Transverse colon (tissue), 4 donors: ENCODE measurements at regions of chr4 and their contacts with region 1.

Region 1: DNA sequence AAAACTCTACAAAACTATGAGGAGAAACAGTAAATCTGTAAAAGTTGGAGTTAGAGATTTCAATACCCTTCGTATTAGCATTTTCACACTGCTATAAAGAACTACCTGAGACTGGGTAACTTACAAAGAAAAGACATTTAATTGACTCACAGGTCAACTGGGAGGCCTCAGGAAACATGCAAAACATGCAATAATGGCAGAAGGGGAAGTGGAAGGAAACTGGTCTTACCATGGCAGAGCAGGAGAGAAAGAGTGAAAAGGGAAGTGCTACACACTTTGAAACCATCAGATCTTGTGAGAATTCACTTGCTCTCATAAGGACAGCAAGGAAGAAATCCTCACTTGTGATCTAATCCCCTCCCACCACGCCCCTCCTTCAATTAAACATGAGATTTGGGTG is 949.9 kb downstream of the TECRL start:
- DNase-seq: no peak
- H3K4me3 ChIP-seq: no peak overlapping the region
- H3K27ac ChIP-seq: no peak overlapping the region
- H3K4me1 ChIP-seq: no peaks in the 10 kb centered on the region
- H3K27me3 ChIP-seq: no peaks in the 10 kb centered on the region
- CTCF ChIP-seq: no peak
- EP300 ChIP-seq: no peak
- POLR2A ChIP-seq: no peak

Region 2: GRCh38 chr4:63211776-63212479 is 247.4 kb before region 1 on chr4:
- in situ Hi-C with region 1: no loop called
- intact Hi-C with region 1: no loop called
- DNase-seq: no peak
- H3K4me3 ChIP-seq: no peak overlapping the region
- H3K27ac ChIP-seq: no peak overlapping the region
- H3K4me1 ChIP-seq: no peaks in the 10 kb centered on the region
- H3K27me3 ChIP-seq: no peaks in the 10 kb centered on the region
- CTCF ChIP-seq: no peak
- EP300 ChIP-seq: no peak
- POLR2A ChIP-seq: no peak

Region 3: DNA sequence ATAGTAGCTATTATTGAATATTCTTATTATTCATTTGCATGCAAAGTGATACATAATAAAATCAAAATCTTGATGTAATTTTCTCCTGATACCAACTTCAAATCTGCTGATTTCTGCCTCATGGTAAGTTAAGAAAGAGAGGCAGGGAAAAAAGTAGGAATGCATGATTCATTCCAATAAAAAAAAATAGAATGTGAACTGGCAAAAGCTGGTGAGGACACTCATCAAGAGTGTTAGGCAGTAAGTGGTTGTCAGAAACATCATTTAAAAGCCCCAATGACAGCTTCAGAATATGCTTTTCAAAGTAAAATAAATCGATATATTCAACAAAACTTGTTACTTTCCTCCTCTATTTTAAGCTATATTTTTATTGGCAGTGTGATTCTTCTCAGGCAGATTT is 29.2 kb before region 1 on chr4:
- in situ Hi-C with region 1: no loop called
- intact Hi-C with region 1: loop called (anchors 2 kb)
- DNase-seq: no peak
- H3K4me3 ChIP-seq: no peak overlapping the region
- H3K27ac ChIP-seq: no peak overlapping the region
- H3K4me1 ChIP-seq: no peaks in the 10 kb centered on the region
- H3K27me3 ChIP-seq: no peaks in the 10 kb centered on the region
- CTCF ChIP-seq: no peak
- EP300 ChIP-seq: no peak
- POLR2A ChIP-seq: no peak

Region 4: DNA sequence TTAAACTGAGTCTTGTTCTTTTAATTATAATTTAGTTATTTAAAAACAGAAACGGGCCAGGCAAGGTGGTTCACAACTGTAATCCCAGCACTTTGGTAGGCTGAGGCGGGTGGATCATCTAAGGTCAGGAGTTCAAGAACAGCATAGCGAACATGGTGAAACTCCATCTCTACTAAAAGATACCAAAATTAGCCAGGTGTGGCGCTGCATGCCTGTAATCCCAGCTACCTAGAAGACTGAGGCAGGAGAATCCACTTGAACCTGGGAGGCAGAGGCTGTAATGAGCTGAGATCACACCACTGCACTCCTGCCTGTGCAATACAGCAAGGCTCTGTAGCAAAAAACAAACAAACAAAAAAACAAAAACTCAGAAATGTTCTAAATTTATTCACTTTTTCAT is 97.0 kb after region 1 on chr4:
- in situ Hi-C with region 1: no loop called
- intact Hi-C with region 1: no loop called
- DNase-seq: no peak
- H3K4me3 ChIP-seq: no peak overlapping the region
- H3K27ac ChIP-seq: no peak overlapping the region
- H3K4me1 ChIP-seq: no peaks in the 10 kb centered on the region
- H3K27me3 ChIP-seq: no peaks in the 10 kb centered on the region
- CTCF ChIP-seq: no peak
- EP300 ChIP-seq: no peak
- POLR2A ChIP-seq: no peak

Region 5: GRCh38 chr4:63983224-63983623 is 523.9 kb after region 1 on chr4:
- in situ Hi-C with region 1: no loop called
- intact Hi-C with region 1: no loop called
- DNase-seq: no peak
- H3K4me3 ChIP-seq: no peak overlapping the region
- H3K27ac ChIP-seq: no peak overlapping the region
- H3K4me1 ChIP-seq: no peaks in the 10 kb centered on the region
- H3K27me3 ChIP-seq: no peaks in the 10 kb centered on the region
- CTCF ChIP-seq: no peak
- EP300 ChIP-seq: no peak
- POLR2A ChIP-seq: no peak